HCT116 (cell line): ENCODE measurements at regions of chr17 and their contacts with region 1.

Region 1: GRCh38 chr17:7745748-7746470 is 28.4 kb downstream of the DNAH2 start:
- DNase-seq: peak; percentile 73
- ATAC-seq: peak; percentile 74
- H3K4me3 ChIP-seq: peak overlapping the region in 1 of 2 experiments; percentile 14; a peak in 2 of 4 replicates
- H3K27ac ChIP-seq: peak overlapping the region; percentile 60
- H3K4me1 ChIP-seq: peaks cover 23 to 41% of the 10 kb centered on the region in 2 experiments
- H3K27me3 ChIP-seq: no peaks in the 10 kb centered on the region
- CTCF ChIP-seq: peak; percentile 28 to 43 (median 43); a peak in 5 of 6 replicates
- POLR2A ChIP-seq: no peak
- RAD21 ChIP-seq: peak; percentile 53

Region 2: GRCh38 chr17:7656958-7657609 is 88.8 kb before region 1 on chr17:
- CTCF ChIA-PET with region 1: no interaction called
- POLR2A ChIA-PET with region 1: no interaction called
- RAD21 ChIA-PET with region 1: no interaction called
- intact Hi-C with region 1: no loop called
- DNase-seq: no peak
- ATAC-seq: peak; percentile 50; the same call in 1 of the 2 replicates
- H3K4me3 ChIP-seq: no peak overlapping the region
- H3K27ac ChIP-seq: no peak overlapping the region
- H3K4me1 ChIP-seq: peaks cover 7% of the 10 kb centered on the region in 2 experiments; a peak in 3 of 4 replicates
- H3K27me3 ChIP-seq: no peaks in the 10 kb centered on the region; the same call in 1 of the 2 replicates
- CTCF ChIP-seq: 0 out of 6 replicates have a peak, but pooled peaks of 1 of the 3 experiments have one; percentile 7
- POLR2A ChIP-seq: no peak
- RAD21 ChIP-seq: no peak

Region 3: DNA sequence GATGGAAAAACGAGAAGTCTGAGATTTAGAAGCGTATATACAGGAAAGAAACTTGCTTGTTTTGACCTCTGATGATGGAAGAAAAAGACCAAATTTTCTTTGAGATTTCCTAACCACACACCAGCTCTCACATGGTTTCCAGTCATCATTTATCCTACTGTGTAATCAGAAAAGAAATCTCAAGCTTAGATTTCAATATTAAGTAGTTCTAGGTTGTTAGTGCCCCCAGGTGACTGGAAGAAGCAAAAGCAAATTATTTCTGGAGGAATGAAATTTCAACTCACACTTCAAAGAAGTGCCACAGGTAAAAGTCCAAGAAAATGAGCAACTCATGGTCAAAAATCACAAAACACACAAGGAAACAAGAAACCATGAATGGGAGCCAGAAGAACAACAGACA is 36.3 kb after region 1 on chr17:
- CTCF ChIA-PET with region 1: interaction called, 39 read pairs
- POLR2A ChIA-PET with region 1: interaction called, 4 read pairs
- RAD21 ChIA-PET with region 1: interaction called, 4 to 5 read pairs
- intact Hi-C with region 1: loop called (anchors 2 kb)
- DNase-seq: no peak
- ATAC-seq: no peak
- H3K4me3 ChIP-seq: no peak overlapping the region
- H3K27ac ChIP-seq: no peak overlapping the region
- H3K4me1 ChIP-seq: no peaks in the 10 kb centered on the region
- H3K27me3 ChIP-seq: 0 out of 2 replicates have a peak, but pooled peaks cover 6% of the 10 kb centered on the region
- CTCF ChIP-seq: peak; percentile 20 to 86 (median 44); a peak in 5 of 6 replicates
- POLR2A ChIP-seq: no peak
- RAD21 ChIP-seq: peak; percentile 74

Region 4: GRCh38 chr17:7803981-7804380 is 58.1 kb after region 1 on chr17:
- CTCF ChIA-PET with region 1: no interaction called
- POLR2A ChIA-PET with region 1: no interaction called
- RAD21 ChIA-PET with region 1: no interaction called
- intact Hi-C with region 1: no loop called
- DNase-seq: no peak
- ATAC-seq: peak; percentile 84
- H3K4me3 ChIP-seq: peak overlapping the region in 1 of 2 experiments; percentile 25; a peak in 1 of 4 replicates
- H3K27ac ChIP-seq: no peak overlapping the region
- H3K4me1 ChIP-seq: peaks cover 5 to 12% of the 10 kb centered on the region in 2 experiments; a peak in 2 of 4 replicates
- H3K27me3 ChIP-seq: no peaks in the 10 kb centered on the region
- CTCF ChIP-seq: no peak
- POLR2A ChIP-seq: no peak
- RAD21 ChIP-seq: no peak